Tibial artery (tissue), 4 donors: ENCODE measurements at regions of chr1 and their contacts with region 1.

Region 1: DNA sequence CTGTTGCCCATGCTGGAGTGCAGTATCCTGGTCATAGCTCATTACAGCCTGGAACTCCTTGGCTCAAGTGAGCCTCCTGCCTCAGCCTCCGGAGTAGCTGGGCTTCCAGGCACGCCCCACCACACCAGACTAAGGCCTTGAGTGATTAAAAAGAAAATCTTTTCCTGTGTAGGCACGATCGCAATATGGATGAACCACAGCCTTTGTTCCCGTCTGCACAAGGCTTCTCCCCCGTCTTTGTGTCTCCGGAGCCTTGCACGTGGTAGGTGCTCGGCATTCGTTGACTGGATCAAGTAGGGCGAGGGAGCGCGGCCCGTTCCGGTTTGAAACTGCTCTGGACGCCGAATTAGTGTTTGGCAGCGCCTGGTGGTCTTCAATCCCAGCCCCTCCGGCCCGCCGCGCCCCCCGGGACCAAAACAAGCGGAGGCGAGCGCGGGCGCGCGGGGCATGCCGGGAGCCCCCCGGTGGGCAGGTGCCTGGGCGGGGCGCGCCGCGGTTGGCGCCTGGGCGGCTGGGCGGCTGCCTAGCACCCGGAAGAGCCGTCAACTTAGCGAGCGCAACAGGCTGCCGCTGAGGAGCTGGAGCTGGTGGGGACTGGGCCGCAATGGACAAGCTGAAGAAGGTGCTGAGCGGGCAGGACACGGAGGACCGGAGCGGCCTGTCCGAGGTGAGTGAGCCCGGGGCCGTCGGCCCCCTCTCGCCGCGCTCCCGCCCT is at the start of gene SFT2D2:
- DNase-seq: peak; percentile 60 to 88
- H3K4me3 ChIP-seq: peak within 1 kb of the TSS; percentile 93 to 98
- H3K27ac ChIP-seq: peak within 1 kb of the TSS; percentile 89 to 98
- H3K4me1 ChIP-seq: peaks cover 0 to 40% (median 27%) of the 10 kb centered on the region in 4 donors
- H3K27me3 ChIP-seq: no peaks in the 10 kb centered on the region
- CTCF ChIP-seq: no peak

Region 2: DNA sequence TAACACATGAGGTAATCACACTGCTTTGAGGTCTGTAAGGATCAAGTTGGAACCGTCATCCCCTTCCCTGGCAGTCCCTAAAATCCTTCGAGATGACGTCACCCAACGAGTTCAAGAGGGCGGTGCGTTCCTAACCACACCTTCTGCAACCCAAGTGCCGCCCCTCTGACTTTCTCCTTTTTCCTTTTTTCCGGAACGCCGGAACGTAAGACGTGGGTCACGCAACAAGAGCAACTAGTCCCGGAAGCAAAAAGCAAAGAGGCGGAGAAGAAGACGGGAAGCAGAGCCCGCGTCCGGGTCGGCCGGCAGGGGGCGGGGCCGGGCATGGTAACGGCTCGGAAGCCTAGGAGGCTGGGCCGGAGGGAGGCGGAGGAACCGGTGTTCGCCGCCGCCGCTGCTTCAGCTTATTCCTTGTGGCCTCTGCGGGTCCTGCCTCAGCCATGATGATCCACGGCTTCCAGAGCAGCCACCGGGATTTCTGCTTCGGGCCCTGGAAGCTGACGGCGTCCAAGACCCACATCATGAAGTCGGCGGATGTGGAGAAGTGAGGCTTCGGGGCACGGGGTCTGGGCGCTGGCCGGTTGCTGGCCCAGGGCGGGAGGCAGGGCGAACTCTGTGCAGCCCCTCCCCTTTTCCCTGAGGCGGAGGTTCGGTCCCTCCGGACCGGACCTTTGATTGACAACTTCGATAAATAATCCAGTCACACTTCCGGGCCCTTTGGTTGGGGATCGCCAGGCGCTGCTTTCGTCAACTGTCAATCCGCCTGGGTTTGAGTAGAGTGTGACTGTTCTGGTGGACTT is 46.8 kb before region 1 on chr1 and contains the start of gene TIPRL:
- intact Hi-C with region 1: loop called (anchors 5 kb)
- DNase-seq: peak; percentile 96 to 98
- H3K4me3 ChIP-seq: peak within 1 kb of the TSS; percentile 73 to 76
- H3K27ac ChIP-seq: peak within 1 kb of the TSS; percentile 88 to 91
- H3K4me1 ChIP-seq: peaks cover 0 to 19% (median 10%) of the 10 kb centered on the region in 4 donors
- H3K27me3 ChIP-seq: no peaks in the 10 kb centered on the region
- CTCF ChIP-seq: peak; percentile 65 to 79

Region 3: DNA sequence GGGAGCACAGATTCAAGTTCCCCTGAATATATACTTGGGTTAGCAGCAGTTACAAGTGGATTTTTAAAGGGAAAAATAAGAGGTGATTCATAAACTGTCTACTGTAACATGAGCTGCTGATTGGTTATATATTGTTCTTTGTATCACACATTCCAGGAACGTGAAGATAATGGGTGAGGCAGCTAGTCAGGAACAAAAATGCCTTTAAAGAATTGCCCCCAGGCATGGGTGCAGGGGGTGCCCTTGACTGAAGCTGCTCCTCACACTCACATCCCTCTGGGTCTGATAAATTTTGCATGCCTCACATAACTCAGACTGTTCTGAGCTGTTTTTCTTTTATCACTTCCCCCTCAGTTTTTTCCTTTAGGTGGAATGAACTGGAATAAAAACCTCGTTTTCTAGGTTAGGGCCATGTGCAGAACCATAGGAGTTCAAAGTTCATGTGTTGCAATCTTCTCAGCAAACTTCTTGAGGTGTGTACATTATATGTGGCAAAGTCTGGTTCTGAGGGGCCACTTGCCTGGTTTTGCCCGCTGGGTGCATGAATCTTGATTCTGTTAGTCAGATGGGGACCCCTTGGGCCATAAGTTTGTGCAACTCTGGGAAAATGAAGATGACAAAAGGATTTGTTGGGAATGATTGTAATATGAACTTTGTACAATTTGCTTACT is 76.2 kb after region 1 on chr1:
- intact Hi-C with region 1: no loop called
- DNase-seq: no peak
- H3K4me3 ChIP-seq: no peak overlapping the region
- H3K27ac ChIP-seq: no peak overlapping the region
- H3K4me1 ChIP-seq: no peaks in the 10 kb centered on the region
- H3K27me3 ChIP-seq: no peaks in the 10 kb centered on the region
- CTCF ChIP-seq: no peak

Region 4: DNA sequence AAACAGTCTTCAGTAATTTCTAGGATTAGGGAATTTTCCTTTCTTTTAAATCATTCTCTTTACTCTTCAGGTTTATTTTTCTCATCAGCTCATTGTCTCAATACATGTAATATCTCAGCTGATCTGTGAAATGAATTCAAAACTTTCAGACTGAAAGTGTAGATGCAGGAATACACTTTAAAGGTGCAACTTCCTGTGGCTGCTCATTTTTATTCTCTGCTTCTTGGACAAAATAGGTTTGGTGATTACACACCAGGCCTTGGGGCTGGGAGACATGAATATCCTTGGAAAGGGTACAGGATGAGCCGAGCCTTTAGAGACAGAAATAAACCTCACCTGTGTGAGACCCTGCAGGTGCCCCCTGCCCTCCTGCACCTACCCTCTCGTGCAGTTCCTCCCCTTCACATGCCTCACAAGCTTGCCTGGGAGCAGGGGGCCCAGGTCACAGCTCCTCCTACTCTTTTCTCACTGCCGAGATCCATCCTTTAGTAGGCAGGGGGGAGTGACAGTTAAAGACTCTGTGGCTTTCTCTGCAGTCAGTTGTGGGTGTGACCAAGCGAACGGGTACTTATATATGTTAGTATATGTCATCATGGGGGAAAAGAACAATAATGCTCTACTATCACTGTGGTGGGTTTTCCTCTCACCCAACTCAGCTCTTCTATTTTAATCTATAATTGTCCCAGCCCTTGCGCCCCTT is 294.6 kb after region 1 on chr1:
- intact Hi-C with region 1: no loop called
- DNase-seq: no peak
- H3K4me3 ChIP-seq: no peak overlapping the region
- H3K27ac ChIP-seq: no peak overlapping the region
- H3K4me1 ChIP-seq: no peaks in the 10 kb centered on the region
- H3K27me3 ChIP-seq: peaks cover 0 to 4% of the 10 kb centered on the region in 2 donors
- CTCF ChIP-seq: no peak